PC-3 (cell line): ENCODE measurements at regions of chr7 and their contacts with region 1.

Region 1: GRCh38 chr7:118878336-118878735 is 653.8 kb downstream of the ANKRD7 start:
- DNase-seq: no peak
- ATAC-seq: no peak
- H3K4me3 ChIP-seq: no peak overlapping the region
- H3K27ac ChIP-seq: no peak overlapping the region
- H3K4me1 ChIP-seq: no peaks in the 10 kb centered on the region
- H3K27me3 ChIP-seq: no peaks in the 10 kb centered on the region
- CTCF ChIP-seq: no peak

Region 2: DNA sequence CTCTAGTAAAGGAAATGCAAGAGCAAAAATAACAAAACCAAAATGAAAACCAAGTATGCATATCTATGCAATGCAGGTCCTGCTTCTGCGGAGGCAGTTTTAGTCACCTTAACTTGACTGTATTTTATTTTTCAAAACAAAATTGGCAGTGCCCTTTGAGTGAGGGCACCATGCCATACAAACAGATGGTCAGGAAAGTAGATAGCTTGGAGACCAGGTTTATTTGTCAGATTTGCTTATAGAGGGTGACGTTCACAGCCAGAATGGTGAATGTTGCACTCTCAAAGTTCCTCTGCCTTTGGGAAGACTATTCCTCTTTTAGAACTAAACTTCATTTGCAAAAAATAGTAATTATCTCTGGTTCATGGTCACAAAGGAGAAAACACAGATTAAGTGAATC is 148.1 kb after region 1 on chr7:
- CTCF ChIA-PET with region 1: no interaction called
- POLR2A ChIA-PET with region 1: no interaction called
- intact Hi-C with region 1: no loop called
- DNase-seq: no peak
- ATAC-seq: no peak
- H3K4me3 ChIP-seq: no peak overlapping the region
- H3K27ac ChIP-seq: no peak overlapping the region
- H3K4me1 ChIP-seq: no peaks in the 10 kb centered on the region
- H3K27me3 ChIP-seq: no peaks in the 10 kb centered on the region
- CTCF ChIP-seq: no peak

Region 3: GRCh38 chr7:119842786-119843185 is 964.5 kb after region 1 on chr7:
- CTCF ChIA-PET with region 1: no interaction called
- POLR2A ChIA-PET with region 1: no interaction called
- intact Hi-C with region 1: loop called (anchors 5 kb)
- DNase-seq: no peak
- ATAC-seq: no peak
- H3K4me3 ChIP-seq: no peak overlapping the region
- H3K27ac ChIP-seq: no peak overlapping the region
- H3K4me1 ChIP-seq: no peaks in the 10 kb centered on the region
- H3K27me3 ChIP-seq: no peaks in the 10 kb centered on the region
- CTCF ChIP-seq: no peak